Posterior cingulate gyrus (tissue), 11 donors: ENCODE measurements at regions of chr1 and their contacts with region 1.

Region 1: GRCh38 chr1:86507935-86508582 is 38.8 kb upstream of the CLCA4 start:
- DNase-seq: no peak

Region 2: GRCh38 chr1:86380257-86380861 is 127.7 kb before region 1 on chr1:
- intact Hi-C with region 1: loop called (anchors 2 kb)
- DNase-seq: no peak